HepG2 (cell line): ENCODE measurements at regions of chr16 and their contacts with region 1.

Region 1: DNA sequence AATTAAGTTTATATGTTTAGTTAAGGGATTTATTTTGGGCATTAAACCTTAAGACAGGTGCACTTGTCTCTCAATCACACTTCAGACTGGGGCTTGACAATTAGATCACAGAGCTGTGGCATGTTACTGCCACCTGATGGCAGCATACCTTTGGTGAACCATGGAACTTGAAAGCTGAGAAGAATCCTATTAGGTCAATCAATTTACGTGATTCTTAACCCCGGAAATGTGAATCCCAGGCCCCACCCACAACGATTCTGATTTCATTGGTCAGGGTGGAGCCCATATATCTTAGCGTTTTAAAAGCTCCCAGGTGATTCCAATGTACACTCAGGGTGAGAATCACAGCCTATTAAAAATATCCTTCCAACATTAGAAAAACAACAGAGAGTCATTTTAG is 91.0 kb downstream of the GSG1L start:
- DNase-seq: peak; percentile 51
- ATAC-seq: peak; percentile 85
- H3K4me3 ChIP-seq: no peak overlapping the region
- H3K27ac ChIP-seq: no peak overlapping the region
- H3K4me1 ChIP-seq: no peaks in the 10 kb centered on the region
- H3K27me3 ChIP-seq: peaks cover 0 to 14% of the 10 kb centered on the region in 2 experiments; a peak in 2 of 5 replicates
- CTCF ChIP-seq: peak; percentile 80
- EP300 ChIP-seq: no peak
- POLR2A ChIP-seq: no peak
- RAD21 ChIP-seq: peak; percentile 61

Region 2: DNA sequence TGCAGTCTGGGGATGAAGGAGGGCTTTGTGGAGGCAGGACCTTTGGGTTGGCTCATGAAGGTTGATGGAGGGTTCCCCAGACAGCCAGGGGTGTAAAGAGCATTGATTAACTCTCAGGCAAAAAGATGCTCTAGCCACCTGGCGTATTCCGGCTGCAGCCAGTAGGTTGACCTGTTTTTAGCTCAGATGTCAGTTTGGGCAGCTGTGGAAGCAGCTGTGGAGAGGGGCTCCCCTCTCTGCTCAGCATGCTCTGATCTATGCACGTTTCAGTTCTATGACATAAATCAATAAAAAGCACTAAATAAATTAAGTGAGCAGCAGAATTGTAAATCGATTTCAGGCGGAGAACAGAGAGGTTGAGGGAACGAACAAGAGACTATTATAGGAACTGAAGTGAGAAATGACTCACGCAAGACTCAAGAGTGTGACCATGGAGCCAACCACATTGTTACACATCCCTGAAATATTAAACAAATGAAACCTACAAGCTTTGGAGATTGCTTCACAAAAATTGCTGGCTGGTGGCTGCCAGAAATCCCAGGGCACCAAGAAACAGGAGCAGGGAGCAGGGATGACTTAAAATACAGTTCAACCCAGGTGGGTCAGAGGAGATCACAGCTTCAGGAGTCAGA is 20.9 kb before region 1 on chr16:
- CTCF ChIA-PET with region 1: no interaction called
- POLR2A ChIA-PET with region 1: no interaction called
- in situ Hi-C with region 1: no loop called
- intact Hi-C with region 1: no loop called
- DNase-seq: no peak
- ATAC-seq: no peak
- H3K4me3 ChIP-seq: no peak overlapping the region
- H3K27ac ChIP-seq: no peak overlapping the region
- H3K4me1 ChIP-seq: no peaks in the 10 kb centered on the region
- H3K27me3 ChIP-seq: peaks cover 0 to 18% of the 10 kb centered on the region in 2 experiments; a peak in 4 of 5 replicates
- CTCF ChIP-seq: no peak
- EP300 ChIP-seq: no peak
- POLR2A ChIP-seq: no peak
- RAD21 ChIP-seq: no peak

Region 3: DNA sequence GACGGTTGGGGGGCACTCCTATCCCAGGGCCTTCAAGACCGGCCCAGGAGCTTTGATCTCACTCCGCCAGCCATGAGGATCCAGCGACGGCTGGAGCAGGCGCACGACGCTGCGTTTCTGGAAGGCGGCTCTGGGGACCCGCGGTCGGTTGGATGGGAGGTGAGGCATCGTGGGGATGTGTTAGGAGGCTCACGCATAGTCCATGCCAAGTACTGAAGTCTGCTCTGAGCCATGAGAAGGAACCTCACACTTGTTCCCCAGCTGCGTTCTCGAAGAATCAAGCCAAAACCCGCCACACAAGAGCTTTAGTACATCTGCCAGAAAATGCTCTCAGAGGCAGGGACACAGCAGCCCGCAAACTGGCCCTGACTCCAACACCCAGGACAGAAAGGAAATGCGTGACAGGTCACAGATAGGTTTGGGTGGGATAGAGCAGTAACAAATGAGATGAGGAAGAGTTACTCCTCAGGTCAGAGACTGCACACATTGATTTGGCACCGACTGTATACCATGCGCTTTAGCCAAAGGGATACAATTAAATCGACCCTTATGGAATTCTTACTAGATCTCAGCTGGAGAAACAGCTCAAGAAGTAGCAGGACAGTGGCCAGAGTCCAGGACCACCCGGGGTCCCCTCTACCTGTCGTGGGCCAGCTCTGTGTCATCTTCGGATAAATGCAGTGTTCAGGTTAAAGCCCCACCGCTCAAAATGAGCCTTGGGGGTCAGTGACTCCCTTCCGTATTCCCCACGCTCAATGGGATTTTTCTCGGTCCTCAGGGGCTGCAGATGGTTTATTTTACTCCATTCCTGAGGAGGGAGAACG is 97.7 kb after region 1 on chr16:
- CTCF ChIA-PET with region 1: interaction called, 30 read pairs
- POLR2A ChIA-PET with region 1: no interaction called
- in situ Hi-C with region 1: loop called (anchors 5 kb)
- intact Hi-C with region 1: loop called (anchors 1 kb)
- DNase-seq: no peak
- ATAC-seq: peak; percentile 17
- H3K4me3 ChIP-seq: no peak overlapping the region
- H3K27ac ChIP-seq: no peak overlapping the region
- H3K4me1 ChIP-seq: no peaks in the 10 kb centered on the region
- H3K27me3 ChIP-seq: peaks cover 9 to 45% of the 10 kb centered on the region in 2 experiments
- CTCF ChIP-seq: no peak
- EP300 ChIP-seq: no peak
- POLR2A ChIP-seq: no peak
- RAD21 ChIP-seq: no peak

Region 4: GRCh38 chr16:28211712-28212534 is 239.4 kb after region 1 on chr16 and contains the start of gene XPO6:
- CTCF ChIA-PET with region 1: no interaction called
- POLR2A ChIA-PET with region 1: no interaction called
- in situ Hi-C with region 1: loop called (anchors 10 kb)
- intact Hi-C with region 1: loop called (anchors 5 kb)
- DNase-seq: peak; percentile 86
- ATAC-seq: peak; percentile 94
- H3K4me3 ChIP-seq: peak within 1 kb of the TSS; percentile 75 to 94 (median 79)
- H3K27ac ChIP-seq: peak within 1 kb of the TSS; percentile 60
- H3K4me1 ChIP-seq: peaks cover 46% of the 10 kb centered on the region
- H3K27me3 ChIP-seq: no peaks in the 10 kb centered on the region
- CTCF ChIP-seq: no peak; the same call in 1 of the 2 replicates
- EP300 ChIP-seq: peak in 1 of 2 experiments; percentile 29; a peak in 1 of 4 replicates
- POLR2A ChIP-seq: peak; percentile 15 to 60; a peak in 2 of 4 replicates
- RAD21 ChIP-seq: peak; percentile 53
- total RNA-seq, gene XPO6: 102 and 109 TPM in 2 replicates

Region 5: GRCh38 chr16:28218104-28218503 is 245.6 kb after region 1 on chr16:
- CTCF ChIA-PET with region 1: interaction called, 3 read pairs
- POLR2A ChIA-PET with region 1: no interaction called
- in situ Hi-C with region 1: loop called (anchors 10 kb)
- intact Hi-C with region 1: loop called (anchors 5 kb)
- DNase-seq: peak; percentile 56
- ATAC-seq: peak; percentile 87
- H3K4me3 ChIP-seq: no peak overlapping the region
- H3K27ac ChIP-seq: no peak overlapping the region
- H3K4me1 ChIP-seq: no peaks in the 10 kb centered on the region; the same call in 1 of the 2 replicates
- H3K27me3 ChIP-seq: no peaks in the 10 kb centered on the region
- CTCF ChIP-seq: peak; percentile 78
- EP300 ChIP-seq: no peak
- POLR2A ChIP-seq: no peak
- RAD21 ChIP-seq: 0 out of 2 replicates have a peak, but pooled peaks have one; percentile 22